Endothelial cell of umbilical vein (primary cell): ENCODE measurements at regions of chr20 and their contacts with region 1.

Region 1: GRCh38 chr20:32470025-32470861 is 112.1 kb downstream of the ASXL1 start:
- DNase-seq: peak; percentile 99
- H3K4me3 ChIP-seq: no peak overlapping the region
- H3K27ac ChIP-seq: peak overlapping the region; percentile 97
- H3K4me1 ChIP-seq: peaks cover 94% of the 10 kb centered on the region
- H3K27me3 ChIP-seq: no peaks in the 10 kb centered on the region
- CTCF ChIP-seq: peak; percentile 95 to 97
- POLR2A ChIP-seq: peak; percentile 79

Region 2: DNA sequence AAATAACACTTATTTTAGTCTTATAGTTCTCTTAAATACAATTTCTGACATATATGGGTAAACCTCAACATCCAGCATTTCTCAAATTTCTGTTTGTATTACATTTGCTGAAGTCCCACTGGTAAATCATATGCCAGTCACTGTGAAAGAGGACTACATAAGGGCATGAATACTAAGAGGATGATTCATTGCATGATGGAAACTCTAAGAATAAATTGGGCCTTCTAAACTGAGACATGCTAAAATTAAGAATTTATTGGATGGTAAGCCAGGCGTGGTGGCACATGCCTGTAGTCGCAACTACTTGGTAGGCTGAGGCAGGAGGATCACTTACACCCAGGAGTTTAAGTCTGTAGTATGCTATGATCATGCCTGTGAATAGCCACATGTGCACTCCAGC is 1017.7 kb before region 1 on chr20:
- CTCF ChIA-PET with region 1: no interaction called
- POLR2A ChIA-PET with region 1: no interaction called
- dilution Hi-C with region 1: no loop called
- intact Hi-C with region 1: no loop called
- DNase-seq: no peak
- H3K4me3 ChIP-seq: no peak overlapping the region
- H3K27ac ChIP-seq: no peak overlapping the region
- H3K4me1 ChIP-seq: no peaks in the 10 kb centered on the region
- H3K27me3 ChIP-seq: no peaks in the 10 kb centered on the region
- CTCF ChIP-seq: no peak
- POLR2A ChIP-seq: no peak

Region 3: DNA sequence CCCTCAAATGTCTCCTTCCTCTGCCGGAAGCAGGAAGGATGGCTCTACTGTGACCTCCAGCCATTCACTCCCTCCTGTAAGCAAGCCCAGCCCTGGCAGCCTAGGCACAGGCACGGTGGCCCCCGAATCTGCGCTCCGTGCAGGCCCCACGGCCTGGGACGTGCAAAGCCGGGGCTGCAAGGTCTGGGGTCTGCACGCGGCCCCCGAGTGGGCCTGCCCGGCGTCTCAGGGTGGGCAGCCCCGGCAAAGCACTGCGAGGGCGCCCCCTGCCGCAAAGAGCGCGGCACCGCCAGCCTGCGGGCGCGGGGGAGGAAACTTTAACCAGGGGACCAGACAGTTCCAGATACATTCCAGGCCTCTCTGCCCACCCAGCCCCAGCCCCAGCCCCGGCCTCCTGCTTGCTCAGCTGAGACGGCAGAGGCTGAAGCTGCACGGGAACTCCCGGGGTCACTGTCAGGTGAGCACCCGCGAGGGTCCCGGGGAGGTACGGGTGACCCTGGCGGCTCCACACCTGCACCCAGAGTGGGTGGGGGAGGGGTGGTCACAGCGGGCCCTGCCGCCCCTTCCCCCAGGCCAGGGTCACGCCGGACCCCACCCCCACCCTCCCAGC is 13.3 kb before region 1 on chr20:
- CTCF ChIA-PET with region 1: interaction called, 12 read pairs
- POLR2A ChIA-PET with region 1: no interaction called
- dilution Hi-C with region 1: no loop called
- intact Hi-C with region 1: loop called (anchors 1 kb)
- DNase-seq: no peak
- H3K4me3 ChIP-seq: no peak overlapping the region
- H3K27ac ChIP-seq: no peak overlapping the region
- H3K4me1 ChIP-seq: peaks cover 20% of the 10 kb centered on the region
- H3K27me3 ChIP-seq: no peaks in the 10 kb centered on the region
- CTCF ChIP-seq: peak; percentile 67 to 75
- POLR2A ChIP-seq: no peak

Region 4: GRCh38 chr20:32497589-32498224 is 27.5 kb after region 1 on chr20:
- CTCF ChIA-PET with region 1: interaction called, 6 read pairs
- POLR2A ChIA-PET with region 1: no interaction called
- dilution Hi-C with region 1: no loop called
- intact Hi-C with region 1: loop called (anchors 1 kb)
- DNase-seq: peak; percentile 63
- H3K4me3 ChIP-seq: no peak overlapping the region
- H3K27ac ChIP-seq: peak overlapping the region; percentile 79
- H3K4me1 ChIP-seq: peaks cover 32% of the 10 kb centered on the region
- H3K27me3 ChIP-seq: no peaks in the 10 kb centered on the region
- CTCF ChIP-seq: no peak
- POLR2A ChIP-seq: peak; percentile 23

Region 5: DNA sequence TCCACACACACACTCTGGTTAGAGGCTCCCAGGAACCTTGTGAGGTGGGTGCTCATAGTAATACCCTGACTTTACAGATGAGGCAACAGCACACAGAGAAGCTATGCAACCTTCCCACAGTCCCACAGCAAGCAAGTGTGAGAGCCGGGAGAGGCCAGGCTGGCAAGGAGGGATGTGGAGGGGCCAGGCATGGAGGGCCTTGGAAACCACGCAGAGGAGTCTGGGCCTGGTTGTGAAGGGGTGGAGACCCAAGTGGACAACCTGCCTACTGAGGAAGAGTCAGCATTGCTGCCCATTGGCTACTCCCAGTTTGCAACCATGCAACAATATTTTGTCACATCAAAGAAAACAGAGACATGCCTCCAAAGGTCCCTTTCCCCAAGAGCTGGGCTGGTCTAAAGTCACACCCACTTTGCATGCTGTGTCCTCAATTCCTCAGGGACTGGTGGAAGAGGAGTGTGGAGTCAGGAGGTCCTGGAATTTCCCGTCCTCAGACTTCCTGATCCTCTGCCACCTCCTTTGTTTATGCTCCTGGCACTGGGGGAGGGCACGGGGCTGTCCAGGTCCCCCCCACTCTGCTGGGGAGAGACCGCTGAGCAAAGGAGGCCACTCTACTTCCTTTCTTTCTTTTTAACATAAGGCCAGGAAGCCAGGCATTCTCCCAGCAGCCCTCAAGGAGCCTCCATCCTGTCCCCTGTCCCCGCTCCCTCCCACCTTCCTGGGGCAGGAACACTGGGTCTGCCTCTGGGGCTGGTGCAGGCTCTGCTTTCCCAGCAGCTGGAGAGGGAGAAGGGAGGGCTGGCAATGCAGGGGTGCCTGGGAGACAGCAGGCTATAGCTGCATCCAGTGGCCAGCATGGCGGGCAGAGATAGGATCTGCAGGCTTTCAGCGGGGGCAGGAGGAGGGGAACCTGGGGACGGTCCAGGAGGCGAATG is 46.6 kb after region 1 on chr20:
- CTCF ChIA-PET with region 1: interaction called, 11 read pairs
- POLR2A ChIA-PET with region 1: no interaction called
- dilution Hi-C with region 1: no loop called
- intact Hi-C with region 1: loop called (anchors 1 kb)
- DNase-seq: peak; percentile 63
- H3K4me3 ChIP-seq: no peak overlapping the region
- H3K27ac ChIP-seq: peak overlapping the region; percentile 1
- H3K4me1 ChIP-seq: peaks cover 24% of the 10 kb centered on the region
- H3K27me3 ChIP-seq: no peaks in the 10 kb centered on the region
- CTCF ChIP-seq: no peak
- POLR2A ChIP-seq: no peak